ENCODE measurements at regions of chr6 and their contacts with region 1.

Region 1: GRCh38 chr6:41027799-41028628 is 11.0 kb downstream of the UNC5CL start:
- DNase-seq: peak; percentile 87
- ATAC-seq: peak; percentile 86
- H3K4me3 Mint-ChIP-seq: peak overlapping the region; percentile 64
- H3K27ac Mint-ChIP-seq: no peak overlapping the region
- H3K4me1 Mint-ChIP-seq: peaks cover 23% of the 10 kb centered on the region
- H3K27me3 Mint-ChIP-seq: no peaks in the 10 kb centered on the region; the same call in 1 of the 2 replicates
- CTCF ChIP-seq: peak; percentile 99

Region 2: DNA sequence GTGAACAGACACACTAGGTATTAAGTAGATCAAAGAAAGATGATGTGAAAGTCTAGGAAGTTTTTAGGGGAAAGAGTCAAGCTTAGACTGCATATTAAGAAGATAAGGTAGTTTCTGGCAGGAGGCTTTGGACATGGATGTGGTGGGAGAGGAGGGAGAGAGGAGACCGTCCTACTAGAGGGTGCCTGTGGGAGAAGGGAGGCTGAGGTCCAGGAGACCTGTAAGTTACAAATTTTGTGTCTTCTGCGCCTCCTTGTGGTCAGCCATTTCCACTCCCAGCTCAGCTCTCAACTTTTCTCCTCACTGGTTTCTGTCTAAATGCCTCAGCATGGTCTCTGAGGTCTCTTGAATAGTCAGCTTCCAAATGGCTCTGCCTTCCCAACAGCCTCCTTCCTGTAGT is 182.5 kb before region 1 on chr6:
- CTCF ChIA-PET with region 1: interaction called, 20 read pairs
- POLR2A ChIA-PET with region 1: no interaction called
- DNase-seq: peak; percentile 71
- ATAC-seq: peak; percentile 90
- H3K4me3 Mint-ChIP-seq: no peak overlapping the region
- H3K27ac Mint-ChIP-seq: no peak overlapping the region
- H3K4me1 Mint-ChIP-seq: peaks cover 24% of the 10 kb centered on the region
- H3K27me3 Mint-ChIP-seq: no peaks in the 10 kb centered on the region; the same call in 1 of the 2 replicates
- CTCF ChIP-seq: peak; percentile 34; the same call in 1 of the 2 replicates

Region 3: DNA sequence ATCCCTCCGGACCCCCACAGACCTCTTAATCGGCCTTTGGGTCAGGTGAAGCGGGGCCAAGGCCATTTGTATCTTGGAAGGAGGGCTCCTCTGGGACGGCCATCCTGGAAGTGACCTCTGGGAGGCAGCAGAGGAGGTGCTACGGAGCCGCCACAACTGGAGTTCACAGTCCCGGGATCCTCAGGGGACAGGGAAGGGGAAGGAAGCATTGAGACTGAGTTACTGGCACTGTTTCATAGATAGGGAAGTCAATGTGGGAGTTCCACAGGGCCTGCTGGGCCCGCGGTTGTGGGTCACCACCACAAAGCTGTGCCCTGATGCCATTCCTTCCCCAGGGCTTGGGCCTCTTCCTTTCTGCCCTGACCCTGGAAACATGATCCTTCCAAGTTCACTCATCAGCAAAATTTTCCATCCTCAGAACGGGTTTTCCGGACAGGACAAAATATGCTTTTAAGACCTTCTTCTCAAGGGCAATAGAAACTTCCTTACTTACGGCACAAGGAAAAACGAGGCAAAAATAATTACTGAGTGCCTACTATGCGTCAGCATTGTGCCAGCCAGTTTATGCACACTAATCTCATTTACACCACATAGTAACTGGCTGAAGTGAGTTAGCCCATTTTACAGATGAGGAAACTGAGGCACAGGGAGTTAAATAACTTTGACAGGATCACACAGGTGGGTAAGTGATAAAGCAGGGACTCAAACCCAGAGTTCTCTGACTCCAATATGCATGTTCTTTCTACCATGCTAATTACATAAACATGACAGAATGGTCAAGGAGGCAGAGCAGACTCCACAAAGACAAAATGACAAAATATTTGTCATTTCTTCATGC is 132.8 kb before region 1 on chr6:
- CTCF ChIA-PET with region 1: interaction called, 43 read pairs
- POLR2A ChIA-PET with region 1: interaction called, 3 read pairs
- DNase-seq: peak; percentile 82
- ATAC-seq: peak; percentile 99
- H3K4me3 Mint-ChIP-seq: no peak overlapping the region
- H3K27ac Mint-ChIP-seq: no peak overlapping the region
- H3K4me1 Mint-ChIP-seq: peaks cover 12% of the 10 kb centered on the region
- H3K27me3 Mint-ChIP-seq: peaks cover 47% of the 10 kb centered on the region
- CTCF ChIP-seq: peak; percentile 30; the same call in 1 of the 2 replicates

Region 4: DNA sequence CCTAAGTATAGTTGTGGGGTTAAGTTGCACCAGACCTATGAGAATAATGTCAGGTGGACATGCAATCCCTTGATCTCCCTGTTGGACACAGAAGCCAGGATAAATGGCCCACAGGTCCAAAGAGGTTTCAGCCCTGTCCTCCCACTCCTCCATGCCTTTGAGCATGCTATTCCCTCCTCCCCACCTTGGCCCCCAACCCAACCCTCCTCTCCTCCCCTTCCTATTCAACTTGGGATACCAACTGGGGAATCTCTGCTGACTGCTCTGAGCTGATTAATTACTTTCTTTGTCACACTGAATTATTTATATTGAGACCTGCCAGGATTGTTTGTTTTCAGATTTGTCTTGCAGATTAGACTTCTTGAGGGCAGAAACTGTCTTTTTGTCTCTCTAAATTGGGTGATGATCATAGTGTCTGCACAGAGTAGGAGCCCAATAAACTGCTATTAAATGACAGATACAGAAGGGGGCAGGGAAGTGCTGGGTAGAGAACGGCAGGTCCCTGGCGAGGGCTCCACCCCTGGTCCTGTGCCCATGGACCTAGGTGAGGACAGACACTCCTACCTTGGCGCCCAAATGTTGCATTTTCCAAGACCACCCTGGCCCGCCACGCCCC is 109.9 kb before region 1 on chr6:
- CTCF ChIA-PET with region 1: interaction called, 38 read pairs
- POLR2A ChIA-PET with region 1: no interaction called
- DNase-seq: no peak
- ATAC-seq: peak; percentile 86
- H3K4me3 Mint-ChIP-seq: no peak overlapping the region
- H3K27ac Mint-ChIP-seq: no peak overlapping the region
- H3K4me1 Mint-ChIP-seq: peaks cover 38% of the 10 kb centered on the region
- H3K27me3 Mint-ChIP-seq: peaks cover 89% of the 10 kb centered on the region
- CTCF ChIP-seq: no peak

Region 5: GRCh38 chr6:40947876-40948526 is 80.0 kb before region 1 on chr6:
- CTCF ChIA-PET with region 1: interaction called, 10 read pairs
- POLR2A ChIA-PET with region 1: no interaction called
- DNase-seq: no peak
- ATAC-seq: peak; percentile 79
- H3K4me3 Mint-ChIP-seq: no peak overlapping the region
- H3K27ac Mint-ChIP-seq: peak overlapping the region; percentile 96
- H3K4me1 Mint-ChIP-seq: peaks cover 54% of the 10 kb centered on the region
- H3K27me3 Mint-ChIP-seq: peaks cover 4% of the 10 kb centered on the region
- CTCF ChIP-seq: no peak

Region 6: DNA sequence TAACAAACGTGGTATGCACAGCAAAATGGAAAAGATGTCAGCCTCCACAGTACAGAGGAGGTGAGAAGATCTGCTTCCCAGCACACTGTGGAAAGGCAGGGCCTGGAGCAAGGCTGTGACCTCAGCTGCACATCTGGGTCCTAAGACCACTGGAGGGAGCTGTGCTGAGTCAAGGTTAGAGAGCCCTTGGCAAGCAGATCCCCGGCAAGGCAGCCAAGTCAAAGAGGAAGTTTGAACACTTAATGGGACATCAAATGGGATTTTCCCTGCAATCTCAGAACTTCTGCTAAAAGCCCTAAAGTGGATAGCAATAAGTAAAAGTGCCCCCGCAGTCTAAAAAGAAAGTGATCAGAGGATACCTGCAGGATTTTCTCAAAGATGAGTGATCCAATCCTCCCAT is 28.4 kb before region 1 on chr6:
- CTCF ChIA-PET with region 1: interaction called, 97 read pairs
- POLR2A ChIA-PET with region 1: interaction called, 6 read pairs
- DNase-seq: peak; percentile 72
- ATAC-seq: peak; percentile 76
- H3K4me3 Mint-ChIP-seq: peak overlapping the region; percentile 22; the same call in 1 of the 2 replicates
- H3K27ac Mint-ChIP-seq: peak overlapping the region; percentile 44; the same call in 1 of the 2 replicates
- H3K4me1 Mint-ChIP-seq: peaks cover 64% of the 10 kb centered on the region
- H3K27me3 Mint-ChIP-seq: peaks cover 16% of the 10 kb centered on the region; the same call in 1 of the 2 replicates
- CTCF ChIP-seq: no peak

Region 7: DNA sequence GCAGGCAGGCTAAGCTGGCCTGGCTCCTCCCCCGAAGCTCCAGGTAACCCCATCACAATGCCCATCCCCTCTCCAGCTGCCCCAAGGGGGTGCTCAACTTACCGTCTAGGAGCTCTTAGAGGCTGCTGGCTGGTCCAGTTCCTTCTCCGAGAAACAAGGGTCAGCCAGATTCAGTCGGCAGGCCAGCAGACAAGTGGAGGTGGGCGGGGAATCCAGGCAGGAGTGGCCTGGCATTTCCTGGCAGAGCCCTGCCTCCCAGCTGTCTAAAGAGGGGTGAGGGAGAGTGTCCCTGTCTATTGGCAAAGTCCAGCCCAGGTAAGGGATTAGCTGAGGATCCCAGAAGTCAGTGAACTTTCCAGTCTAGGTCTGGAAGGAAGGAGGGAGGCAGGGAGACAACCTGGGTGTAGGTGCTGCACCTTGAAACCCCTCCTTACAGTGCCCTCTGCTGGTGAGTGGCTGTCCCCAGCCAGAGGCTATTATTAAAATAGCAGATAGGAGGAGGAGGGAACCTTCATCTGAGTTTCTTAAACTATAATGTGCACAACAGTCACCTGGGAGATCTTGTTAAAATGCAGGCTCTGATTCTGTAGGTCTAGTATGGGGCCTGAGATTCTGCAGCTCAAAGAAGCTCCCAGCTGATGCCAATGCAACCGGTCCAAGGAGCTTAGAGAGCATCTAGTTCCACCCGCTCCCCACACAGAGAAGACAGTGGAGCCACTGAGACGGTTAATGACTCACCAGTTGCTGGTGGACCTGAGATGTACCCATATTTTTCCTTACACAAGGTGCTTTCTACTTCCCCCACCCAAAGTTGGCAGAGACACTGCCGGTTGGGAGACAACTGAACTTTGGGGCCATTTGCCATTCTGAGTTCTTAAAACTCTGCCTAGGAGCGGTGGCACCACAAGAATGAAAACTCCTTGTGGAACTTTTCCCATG is 11.3 kb after region 1 on chr6 and contains the start of gene UNC5CL:
- CTCF ChIA-PET with region 1: interaction called, 94 read pairs
- POLR2A ChIA-PET with region 1: interaction called, 5 read pairs
- DNase-seq: peak; percentile 77
- ATAC-seq: peak; percentile 79
- H3K4me3 Mint-ChIP-seq: no peak within 1 kb of the TSS
- H3K27ac Mint-ChIP-seq: peak within 1 kb of the TSS; percentile 25; the same call in 1 of the 2 replicates
- H3K4me1 Mint-ChIP-seq: peaks cover 15% of the 10 kb centered on the region
- H3K27me3 Mint-ChIP-seq: no peaks in the 10 kb centered on the region
- CTCF ChIP-seq: peak; percentile 64
- total RNA-seq, gene UNC5CL: 3.3 to 4.5 TPM (median 3.6 TPM) in 3 replicates

Region 8: DNA sequence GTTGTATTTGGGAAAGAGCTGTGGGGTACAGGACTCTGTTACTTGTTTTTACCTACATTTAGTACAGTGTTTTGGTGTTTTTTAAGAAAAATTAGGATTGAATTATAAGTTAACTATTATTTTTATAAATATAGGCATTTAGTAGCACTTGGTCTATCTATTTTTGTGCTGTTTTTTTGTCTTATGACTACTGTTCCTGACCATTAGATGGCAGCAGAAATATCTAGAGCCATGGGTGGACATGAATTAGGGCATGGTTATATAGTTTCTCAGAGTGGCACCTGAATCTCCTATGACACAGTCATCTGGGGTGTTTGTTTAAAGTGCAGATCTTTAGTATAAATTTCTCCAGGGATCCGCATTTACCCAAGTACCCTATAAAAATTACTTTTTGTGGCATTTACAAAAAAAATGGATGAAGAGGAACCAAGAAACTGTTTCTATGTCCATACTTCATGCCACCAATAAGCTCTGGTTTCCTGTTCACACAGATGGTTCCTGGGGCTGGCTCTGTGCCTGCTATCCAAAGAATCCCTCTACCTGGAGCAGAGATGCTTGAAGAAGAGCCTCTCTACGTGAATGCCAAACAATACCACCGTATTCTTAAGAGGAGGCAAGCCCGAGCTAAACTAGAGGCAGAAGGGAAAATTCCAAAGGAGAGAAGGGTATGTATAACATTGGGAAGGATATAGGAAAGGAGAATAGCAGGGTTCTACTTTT is 64.6 kb after region 1 on chr6:
- CTCF ChIA-PET with region 1: no interaction called
- POLR2A ChIA-PET with region 1: no interaction called
- DNase-seq: no peak
- ATAC-seq: no peak
- H3K4me3 Mint-ChIP-seq: no peak overlapping the region
- H3K27ac Mint-ChIP-seq: no peak overlapping the region
- H3K4me1 Mint-ChIP-seq: no peaks in the 10 kb centered on the region
- H3K27me3 Mint-ChIP-seq: no peaks in the 10 kb centered on the region
- CTCF ChIP-seq: no peak

Measured in WTC11 (cell line).